CD14-positive monocyte (primary cell): ENCODE measurements at regions of chr1 and their contacts with region 1.

Region 1: DNA sequence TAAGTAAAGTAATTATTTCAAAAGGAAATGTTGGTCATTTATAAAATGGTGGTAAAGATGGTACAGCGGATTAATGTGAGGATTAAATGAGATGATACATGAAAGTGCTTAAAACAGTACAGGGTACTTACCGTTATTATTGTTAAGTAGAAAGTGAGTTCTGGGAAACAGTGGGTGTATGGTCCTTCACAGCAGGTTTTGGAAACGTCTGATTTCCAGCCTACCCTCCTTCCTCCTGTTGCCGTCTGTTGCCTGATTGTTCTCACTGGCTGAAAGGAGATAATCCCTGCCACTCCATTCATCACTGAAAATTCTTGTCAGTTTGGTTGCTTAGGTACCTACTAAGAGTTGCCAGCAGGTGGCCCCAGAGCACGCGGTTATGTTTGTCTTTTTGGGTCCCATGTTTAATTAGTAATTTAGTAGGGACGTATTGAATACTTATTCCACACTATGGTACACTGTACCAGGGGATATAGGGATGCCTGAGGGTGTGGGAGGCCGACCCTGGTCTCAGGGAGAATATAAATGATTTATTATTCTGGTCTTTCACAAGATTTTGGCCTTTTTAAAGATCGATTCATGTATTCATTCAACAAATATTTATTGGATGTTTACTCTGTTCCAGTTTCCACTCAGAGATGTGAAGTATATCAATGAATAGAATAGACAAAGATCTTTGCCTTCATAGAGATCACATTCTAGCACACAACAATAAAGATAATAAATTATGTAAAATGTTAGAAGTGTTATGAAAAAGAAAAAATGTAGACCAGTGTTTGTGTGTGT is 30.8 kb upstream of the RPTN start:
- DNase-seq: peak; percentile 44 to 66 (median 59)
- H3K4me3 ChIP-seq: peak overlapping the region in 1 of 3 experiments; percentile 82
- H3K4me3 Mint-ChIP-seq: peak overlapping the region; percentile 78 to 87
- H3K27ac ChIP-seq: no peak overlapping the region
- H3K27ac Mint-ChIP-seq: peak overlapping the region in 2 of 7 donors; percentile 65 to 73
- H3K4me1 ChIP-seq: peaks cover 15 to 20% of the 10 kb centered on the region in 2 donors
- H3K4me1 Mint-ChIP-seq: peaks cover 27% of the 10 kb centered on the region
- H3K27me3 ChIP-seq: peaks cover 0 to 15% of the 10 kb centered on the region in 2 donors
- H3K27me3 Mint-ChIP-seq: peaks cover 14 to 32% (median 20%) of the 10 kb centered on the region in 3 donors
- CTCF ChIP-seq: peak; percentile 78

Region 2: GRCh38 chr1:152252157-152252556 is 62.3 kb after region 1 on chr1:
- intact Hi-C with region 1: no loop called
- DNase-seq: no peak
- H3K4me3 ChIP-seq: no peak overlapping the region
- H3K4me3 Mint-ChIP-seq: no peak overlapping the region
- H3K27ac ChIP-seq: no peak overlapping the region
- H3K27ac Mint-ChIP-seq: no peak overlapping the region
- H3K4me1 ChIP-seq: no peaks in the 10 kb centered on the region
- H3K4me1 Mint-ChIP-seq: no peaks in the 10 kb centered on the region
- H3K27me3 ChIP-seq: no peaks in the 10 kb centered on the region
- H3K27me3 Mint-ChIP-seq: peaks cover 0 to 3% (median 2%) of the 10 kb centered on the region in 3 donors
- CTCF ChIP-seq: no peak

Region 3: GRCh38 chr1:152440635-152441471 is 251.0 kb after region 1 on chr1:
- intact Hi-C with region 1: loop called in 1 of 2 experiments (anchors 5 kb)
- DNase-seq: peak; percentile 46 to 58 (median 57)
- H3K4me3 ChIP-seq: no peak overlapping the region
- H3K4me3 Mint-ChIP-seq: no peak overlapping the region
- H3K27ac ChIP-seq: no peak overlapping the region
- H3K27ac Mint-ChIP-seq: no peak overlapping the region
- H3K4me1 ChIP-seq: peaks cover 0 to 3% of the 10 kb centered on the region in 2 donors
- H3K4me1 Mint-ChIP-seq: peaks cover 2% of the 10 kb centered on the region
- H3K27me3 ChIP-seq: peaks cover 0 to 2% of the 10 kb centered on the region in 2 donors
- H3K27me3 Mint-ChIP-seq: peaks cover 7 to 16% (median 9%) of the 10 kb centered on the region in 3 donors
- CTCF ChIP-seq: peak; percentile 86